ENCODE measurements at regions of chr7 and their contacts with region 1.

Region 1: GRCh38 chr7:127585044-127585953 is at the start of gene GCC1:
- DNase-seq: peak; percentile 82
- ATAC-seq: peak; percentile 74
- H3K4me3 ChIP-seq: peak within 1 kb of the TSS; percentile 88 to 94
- H3K27ac ChIP-seq: peak within 1 kb of the TSS; percentile 64
- H3K4me1 ChIP-seq: peaks cover 19 to 41% of the 10 kb centered on the region in 2 experiments; a peak in 3 of 4 replicates
- H3K27me3 ChIP-seq: no peaks in the 10 kb centered on the region
- CTCF ChIP-seq: no peak
- POLR2A ChIP-seq: peak; percentile 62
- RAD21 ChIP-seq: no peak
- total RNA-seq, gene GCC1: 17.9 TPM

Region 2: DNA sequence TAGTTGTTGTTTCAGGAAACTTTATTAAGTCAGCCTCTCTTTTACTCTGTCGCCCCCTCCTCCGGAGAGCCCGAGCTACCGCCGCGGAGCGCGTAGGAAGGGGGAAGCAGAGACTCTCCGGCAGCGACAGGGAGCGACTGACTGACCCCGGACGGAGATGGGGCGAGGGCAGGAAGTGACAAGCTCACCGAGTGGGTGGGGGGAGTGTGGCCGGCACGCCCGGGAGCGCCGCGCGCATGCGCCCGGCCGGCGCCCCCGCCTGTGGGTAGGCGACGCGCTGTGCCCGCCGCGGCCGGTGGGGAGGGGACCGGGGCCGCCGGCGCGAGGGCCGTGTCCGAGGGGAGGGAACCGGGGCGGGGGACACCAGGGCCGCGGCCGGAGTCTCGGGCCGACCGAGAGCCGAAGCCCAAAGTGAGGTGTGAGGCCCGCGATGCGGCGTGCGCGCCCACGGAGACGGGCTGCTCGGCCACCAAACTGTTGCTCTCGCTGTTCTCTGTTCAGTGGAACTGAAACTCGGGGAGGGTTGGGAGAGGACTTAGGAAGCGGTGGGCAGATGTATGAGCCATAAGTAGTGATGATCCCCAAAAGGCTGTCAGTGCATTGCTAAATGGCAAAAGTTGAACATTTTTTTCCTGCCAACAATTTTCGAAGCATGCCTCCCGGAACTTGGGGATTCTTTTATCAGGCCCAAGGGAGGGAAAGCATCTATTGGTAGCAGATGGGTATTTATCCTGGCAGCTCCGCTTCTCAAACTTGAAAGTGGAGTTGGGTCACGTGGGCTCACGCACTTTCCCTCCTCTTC is 192.5 kb before region 1 on chr7 and contains the start of gene ZNF800:
- CTCF ChIA-PET with region 1: no interaction called
- POLR2A ChIA-PET with region 1: no interaction called
- RAD21 ChIA-PET with region 1: no interaction called
- intact Hi-C with region 1: loop called (anchors 5 kb)
- DNase-seq: peak; percentile 69
- ATAC-seq: peak; percentile 91
- H3K4me3 ChIP-seq: peak within 1 kb of the TSS; percentile 78 to 82
- H3K27ac ChIP-seq: peak within 1 kb of the TSS; percentile 57
- H3K4me1 ChIP-seq: peaks cover 4 to 13% of the 10 kb centered on the region in 2 experiments; a peak in 3 of 4 replicates
- H3K27me3 ChIP-seq: no peaks in the 10 kb centered on the region
- CTCF ChIP-seq: no peak
- POLR2A ChIP-seq: peak; percentile 25
- RAD21 ChIP-seq: no peak
- total RNA-seq, gene ZNF800: 30.9 TPM

Region 3: GRCh38 chr7:127598318-127598717 is 13.0 kb after region 1 on chr7:
- CTCF ChIA-PET with region 1: interaction called, 12 read pairs
- POLR2A ChIA-PET with region 1: no interaction called
- RAD21 ChIA-PET with region 1: interaction called in 1 of 2 experiments, 3 read pairs
- intact Hi-C with region 1: no loop called
- DNase-seq: peak; percentile 49
- ATAC-seq: peak; percentile 97
- H3K4me3 ChIP-seq: no peak overlapping the region
- H3K27ac ChIP-seq: no peak overlapping the region
- H3K4me1 ChIP-seq: peaks cover 0 to 5% of the 10 kb centered on the region in 2 experiments; a peak in 2 of 4 replicates
- H3K27me3 ChIP-seq: peaks cover 5% of the 10 kb centered on the region; the same call in 1 of the 2 replicates
- CTCF ChIP-seq: peak; percentile 91 to 99 (median 97)
- POLR2A ChIP-seq: no peak
- RAD21 ChIP-seq: peak; percentile 75

Region 4: GRCh38 chr7:127651556-127652332 is 66.4 kb after region 1 on chr7 and contains the start of gene SND1:
- CTCF ChIA-PET with region 1: no interaction called
- POLR2A ChIA-PET with region 1: no interaction called
- RAD21 ChIA-PET with region 1: no interaction called
- intact Hi-C with region 1: loop called (anchors 5 kb)
- DNase-seq: peak; percentile 99
- ATAC-seq: peak; percentile 95
- H3K4me3 ChIP-seq: peak within 1 kb of the TSS; percentile 98 to 100
- H3K27ac ChIP-seq: peak within 1 kb of the TSS; percentile 62
- H3K4me1 ChIP-seq: peaks cover 16 to 22% of the 10 kb centered on the region in 2 experiments
- H3K27me3 ChIP-seq: no peaks in the 10 kb centered on the region
- CTCF ChIP-seq: no peak
- POLR2A ChIP-seq: peak; percentile 34
- RAD21 ChIP-seq: no peak
- total RNA-seq, gene SND1: 169 TPM